Activated B cell treated with CpG ODN at 0.5 μM for 24 hours (primary cell): ENCODE measurements at regions of chr11 and their contacts with region 1.

Region 1: GRCh38 chr11:128261011-128261421 is 326.3 kb downstream of the ETS1 start:
- DNase-seq: no peak
- ATAC-seq: peak; percentile 22
- H3K4me3 Mint-ChIP-seq: no peak overlapping the region
- H3K27ac Mint-ChIP-seq: peak overlapping the region; percentile 85
- H3K4me1 Mint-ChIP-seq: peaks cover 84% of the 10 kb centered on the region
- H3K27me3 Mint-ChIP-seq: no peaks in the 10 kb centered on the region
- CTCF ChIP-seq: no peak

Region 2: DNA sequence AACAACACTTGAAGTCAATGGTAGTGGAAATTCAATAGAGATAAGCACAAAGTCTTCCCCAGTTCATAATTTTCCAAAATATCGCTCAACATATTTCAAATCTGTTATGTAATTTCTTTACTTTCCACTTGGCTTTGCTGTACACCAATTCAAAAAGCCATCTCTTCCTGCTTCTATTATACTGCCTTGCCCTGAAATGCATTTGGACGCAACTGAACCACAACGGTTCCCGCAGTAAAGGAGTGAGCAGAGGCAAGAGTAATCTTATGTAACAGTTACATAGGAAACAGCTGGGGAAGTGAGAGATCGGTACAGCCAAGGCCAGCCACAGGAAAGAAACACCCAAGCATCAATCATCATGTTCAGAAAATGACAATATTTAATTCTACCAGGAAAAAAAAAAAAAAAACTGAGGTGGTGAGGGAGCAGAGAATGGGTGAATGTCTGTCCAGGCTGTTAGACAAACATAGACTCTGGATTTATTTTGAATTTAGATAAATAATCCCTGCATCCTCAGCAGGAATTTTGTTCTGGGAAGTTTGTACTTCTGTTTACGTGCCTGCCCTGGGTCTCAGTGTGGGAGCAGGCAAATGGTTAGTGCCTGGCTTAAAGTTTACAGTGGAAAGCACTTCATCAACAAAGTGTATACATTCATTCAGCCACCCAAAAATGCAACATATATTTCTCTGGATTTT is 65.8 kb before region 1 on chr11:
- CTCF ChIA-PET with region 1: no interaction called
- POLR2A ChIA-PET with region 1: interaction called, 3 read pairs
- intact Hi-C with region 1: loop called (anchors 2 kb)
- DNase-seq: no peak
- ATAC-seq: peak; percentile 84
- H3K4me3 Mint-ChIP-seq: peak overlapping the region; percentile 16
- H3K27ac Mint-ChIP-seq: peak overlapping the region; percentile 22
- H3K4me1 Mint-ChIP-seq: peaks cover 18% of the 10 kb centered on the region
- H3K27me3 Mint-ChIP-seq: no peaks in the 10 kb centered on the region
- CTCF ChIP-seq: no peak